ENCODE measurements at regions of chr3 and their contacts with region 1.

Region 1: GRCh38 chr3:111967651-111968274 is 11.1 kb upstream of the ABHD10 start:
- DNase-seq: no peak
- ATAC-seq: peak; percentile 99
- H3K4me3 ChIP-seq: no peak overlapping the region
- H3K27ac ChIP-seq: no peak overlapping the region
- H3K4me1 ChIP-seq: no peaks in the 10 kb centered on the region
- H3K27me3 ChIP-seq: no peaks in the 10 kb centered on the region
- CTCF ChIP-seq: peak; percentile 78 to 87 (median 85)
- EP300 ChIP-seq: no peak
- POLR2A ChIP-seq: no peak
- RAD21 ChIP-seq: peak; percentile 90

Region 2: DNA sequence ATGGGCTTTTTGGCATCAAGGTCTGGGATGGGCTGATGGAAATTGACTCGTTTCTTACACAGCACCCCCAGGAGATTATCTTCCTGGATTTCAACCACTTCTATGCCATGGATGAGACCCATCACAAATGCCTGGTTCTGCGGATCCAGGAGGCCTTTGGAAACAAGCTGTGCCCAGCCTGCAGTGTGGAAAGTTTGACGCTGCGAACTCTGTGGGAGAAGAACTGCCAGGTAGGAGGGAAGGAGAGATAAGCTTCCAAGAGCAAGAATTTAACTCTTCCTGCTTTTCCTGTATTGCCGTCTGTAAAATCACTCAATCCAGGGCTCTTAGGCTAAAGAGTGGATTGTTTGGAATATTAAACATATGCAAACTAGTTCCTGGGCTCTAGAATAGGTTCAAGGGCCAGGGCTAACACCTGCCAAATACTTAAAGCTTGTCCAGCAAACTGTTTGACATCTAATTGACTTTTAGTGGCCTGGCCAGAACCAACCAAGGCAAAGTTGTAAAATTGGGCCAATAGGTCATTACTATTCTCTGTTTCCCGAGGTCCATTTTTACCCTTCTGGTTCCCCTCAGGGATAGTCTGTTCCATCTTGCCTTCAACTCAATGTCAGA is 259.5 kb before region 1 on chr3:
- CTCF ChIA-PET with region 1: interaction called, 380 read pairs
- POLR2A ChIA-PET with region 1: no interaction called
- RAD21 ChIA-PET with region 1: no interaction called
- SMC1A ChIA-PET with region 1: interaction called, 5 read pairs
- in situ Hi-C with region 1: no loop called
- intact Hi-C with region 1: no loop called
- DNase-seq: no peak
- ATAC-seq: no peak
- H3K4me3 ChIP-seq: no peak overlapping the region
- H3K27ac ChIP-seq: no peak overlapping the region
- H3K4me1 ChIP-seq: no peaks in the 10 kb centered on the region
- H3K27me3 ChIP-seq: no peaks in the 10 kb centered on the region
- CTCF ChIP-seq: no peak
- EP300 ChIP-seq: no peak
- POLR2A ChIP-seq: no peak
- RAD21 ChIP-seq: no peak

Region 3: DNA sequence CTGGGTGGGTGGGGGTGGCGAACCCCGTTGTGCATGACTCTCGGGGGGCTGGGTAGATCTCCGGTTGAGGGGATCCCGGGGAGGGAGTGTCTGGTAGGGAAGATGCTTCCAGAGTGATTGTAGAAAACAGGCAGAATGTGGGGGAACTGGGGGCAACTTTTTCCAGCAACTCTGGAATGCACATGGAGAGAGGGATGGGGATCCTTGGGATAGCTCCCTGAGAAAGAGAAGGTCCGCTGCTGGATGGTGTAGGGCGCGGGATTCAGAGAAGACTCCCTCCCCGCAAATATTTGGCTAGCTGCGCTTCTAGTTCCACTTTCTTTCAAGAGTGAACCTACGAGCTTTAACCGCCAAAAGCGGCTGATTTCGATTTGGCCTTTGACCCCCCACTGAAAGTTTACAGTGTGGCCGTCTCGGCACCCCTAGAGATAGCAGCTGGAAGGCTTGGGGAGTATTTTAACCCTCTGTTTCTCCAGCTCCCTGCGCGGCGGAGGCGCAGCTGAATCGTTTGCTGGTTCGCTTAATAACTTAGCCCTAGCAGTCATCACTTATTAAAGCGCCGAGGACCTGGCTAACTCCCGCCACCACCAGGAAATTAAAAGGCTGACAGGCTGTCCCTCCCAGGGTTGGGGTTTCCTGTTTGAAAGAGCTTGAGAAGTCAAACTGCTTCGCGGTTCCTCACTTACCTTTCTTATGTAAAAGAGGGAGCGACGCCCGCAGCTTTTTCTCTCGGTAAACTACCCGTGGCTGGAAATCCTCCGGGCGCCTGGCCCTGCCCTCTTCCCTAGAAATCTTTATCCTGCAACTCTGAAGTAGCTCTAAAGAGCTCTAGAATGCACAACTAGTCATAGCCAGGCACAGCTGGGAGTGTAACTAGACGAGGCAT is 107.5 kb before region 1 on chr3:
- CTCF ChIA-PET with region 1: interaction called, 27 read pairs
- POLR2A ChIA-PET with region 1: no interaction called
- RAD21 ChIA-PET with region 1: interaction called, 42 read pairs
- SMC1A ChIA-PET with region 1: interaction called, 23 read pairs
- in situ Hi-C with region 1: no loop called
- intact Hi-C with region 1: loop called (anchors 2 kb)
- DNase-seq: peak; percentile 30
- ATAC-seq: peak; percentile 91
- H3K4me3 ChIP-seq: peak overlapping the region; percentile 64
- H3K27ac ChIP-seq: no peak overlapping the region
- H3K4me1 ChIP-seq: peaks cover 5% of the 10 kb centered on the region
- H3K27me3 ChIP-seq: peaks cover 2 to 13% of the 10 kb centered on the region in 2 experiments
- CTCF ChIP-seq: peak; percentile 21 to 33 (median 33); a peak in 3 of 6 replicates
- EP300 ChIP-seq: no peak
- POLR2A ChIP-seq: no peak
- RAD21 ChIP-seq: peak; percentile 53

Region 4: GRCh38 chr3:111904376-111905241 is 63.2 kb before region 1 on chr3:
- CTCF ChIA-PET with region 1: interaction called, 72 read pairs
- POLR2A ChIA-PET with region 1: no interaction called
- RAD21 ChIA-PET with region 1: no interaction called
- SMC1A ChIA-PET with region 1: interaction called, 4 read pairs
- in situ Hi-C with region 1: no loop called
- intact Hi-C with region 1: no loop called
- DNase-seq: no peak
- ATAC-seq: no peak
- H3K4me3 ChIP-seq: no peak overlapping the region
- H3K27ac ChIP-seq: no peak overlapping the region
- H3K4me1 ChIP-seq: no peaks in the 10 kb centered on the region
- H3K27me3 ChIP-seq: no peaks in the 10 kb centered on the region
- CTCF ChIP-seq: no peak
- EP300 ChIP-seq: no peak
- POLR2A ChIP-seq: no peak
- RAD21 ChIP-seq: no peak

Region 5: GRCh38 chr3:111978493-111979433 is 11.0 kb after region 1 on chr3 and contains the start of gene ABHD10:
- CTCF ChIA-PET with region 1: interaction called, 17 read pairs
- POLR2A ChIA-PET with region 1: interaction called, 3 read pairs
- RAD21 ChIA-PET with region 1: interaction called, 13 read pairs
- SMC1A ChIA-PET with region 1: interaction called, 31 read pairs
- in situ Hi-C with region 1: no loop called
- intact Hi-C with region 1: no loop called
- DNase-seq: peak; percentile 92
- ATAC-seq: peak; percentile 97
- H3K4me3 ChIP-seq: peak within 1 kb of the TSS; percentile 89
- H3K27ac ChIP-seq: peak within 1 kb of the TSS; percentile 78
- H3K4me1 ChIP-seq: peaks cover 5% of the 10 kb centered on the region
- H3K27me3 ChIP-seq: no peaks in the 10 kb centered on the region
- CTCF ChIP-seq: no peak
- EP300 ChIP-seq: no peak
- POLR2A ChIP-seq: peak; percentile 99
- RAD21 ChIP-seq: no peak
- polyA plus RNA-seq, gene ABHD10: 12.3 to 16.7 TPM

Region 6: GRCh38 chr3:112043603-112044201 is 75.9 kb after region 1 on chr3:
- CTCF ChIA-PET with region 1: interaction called, 23 read pairs
- POLR2A ChIA-PET with region 1: no interaction called
- RAD21 ChIA-PET with region 1: interaction called, 11 read pairs
- SMC1A ChIA-PET with region 1: interaction called, 14 read pairs
- in situ Hi-C with region 1: no loop called
- intact Hi-C with region 1: loop called (anchors 1 kb)
- DNase-seq: peak; percentile 8
- ATAC-seq: peak; percentile 95
- H3K4me3 ChIP-seq: no peak overlapping the region
- H3K27ac ChIP-seq: no peak overlapping the region
- H3K4me1 ChIP-seq: no peaks in the 10 kb centered on the region
- H3K27me3 ChIP-seq: peaks cover 0 to 6% of the 10 kb centered on the region in 2 experiments; a peak in 1 of 4 replicates
- CTCF ChIP-seq: peak; percentile 80 to 92 (median 86)
- EP300 ChIP-seq: no peak
- POLR2A ChIP-seq: no peak
- RAD21 ChIP-seq: peak; percentile 69

Region 7: GRCh38 chr3:112149136-112149535 is 181.4 kb after region 1 on chr3:
- CTCF ChIA-PET with region 1: no interaction called
- POLR2A ChIA-PET with region 1: no interaction called
- RAD21 ChIA-PET with region 1: no interaction called
- SMC1A ChIA-PET with region 1: no interaction called
- in situ Hi-C with region 1: no loop called
- intact Hi-C with region 1: no loop called
- DNase-seq: no peak
- ATAC-seq: no peak
- H3K4me3 ChIP-seq: no peak overlapping the region
- H3K27ac ChIP-seq: no peak overlapping the region
- H3K4me1 ChIP-seq: no peaks in the 10 kb centered on the region
- H3K27me3 ChIP-seq: no peaks in the 10 kb centered on the region
- CTCF ChIP-seq: no peak
- EP300 ChIP-seq: no peak
- POLR2A ChIP-seq: no peak
- RAD21 ChIP-seq: no peak

Measured in GM12878 (cell line).